HEK293 (cell line): ENCODE measurements at regions of chr2 and their contacts with region 1.

Region 1: GRCh38 chr2:201071479-201072200 is at the starts of genes HYCC2 and NDUFB3:
- H3K4me3 ChIP-seq: peak within 1 kb of the TSS; percentile 100
- H3K27ac ChIP-seq: peak within 1 kb of the TSS; percentile 85
- H3K4me1 ChIP-seq: 0 out of 2 replicates have a peak, but pooled peaks cover 3% of the 10 kb centered on the region
- CTCF ChIP-seq: peak; percentile 98

Region 2: GRCh38 chr2:200820573-200821234 is 250.9 kb before region 1 on chr2:
- CTCF ChIA-PET with region 1: no interaction called
- POLR2A ChIA-PET with region 1: no interaction called
- H3K4me3 ChIP-seq: no peak overlapping the region
- H3K27ac ChIP-seq: no peak overlapping the region
- H3K4me1 ChIP-seq: no peaks in the 10 kb centered on the region
- CTCF ChIP-seq: no peak

Region 3: GRCh38 chr2:200901459-200902072 is 170.1 kb before region 1 on chr2:
- CTCF ChIA-PET with region 1: interaction called, 49 read pairs
- POLR2A ChIA-PET with region 1: interaction called, 4 read pairs
- H3K4me3 ChIP-seq: no peak overlapping the region
- H3K27ac ChIP-seq: no peak overlapping the region
- H3K4me1 ChIP-seq: no peaks in the 10 kb centered on the region
- CTCF ChIP-seq: peak; percentile 78

Region 4: DNA sequence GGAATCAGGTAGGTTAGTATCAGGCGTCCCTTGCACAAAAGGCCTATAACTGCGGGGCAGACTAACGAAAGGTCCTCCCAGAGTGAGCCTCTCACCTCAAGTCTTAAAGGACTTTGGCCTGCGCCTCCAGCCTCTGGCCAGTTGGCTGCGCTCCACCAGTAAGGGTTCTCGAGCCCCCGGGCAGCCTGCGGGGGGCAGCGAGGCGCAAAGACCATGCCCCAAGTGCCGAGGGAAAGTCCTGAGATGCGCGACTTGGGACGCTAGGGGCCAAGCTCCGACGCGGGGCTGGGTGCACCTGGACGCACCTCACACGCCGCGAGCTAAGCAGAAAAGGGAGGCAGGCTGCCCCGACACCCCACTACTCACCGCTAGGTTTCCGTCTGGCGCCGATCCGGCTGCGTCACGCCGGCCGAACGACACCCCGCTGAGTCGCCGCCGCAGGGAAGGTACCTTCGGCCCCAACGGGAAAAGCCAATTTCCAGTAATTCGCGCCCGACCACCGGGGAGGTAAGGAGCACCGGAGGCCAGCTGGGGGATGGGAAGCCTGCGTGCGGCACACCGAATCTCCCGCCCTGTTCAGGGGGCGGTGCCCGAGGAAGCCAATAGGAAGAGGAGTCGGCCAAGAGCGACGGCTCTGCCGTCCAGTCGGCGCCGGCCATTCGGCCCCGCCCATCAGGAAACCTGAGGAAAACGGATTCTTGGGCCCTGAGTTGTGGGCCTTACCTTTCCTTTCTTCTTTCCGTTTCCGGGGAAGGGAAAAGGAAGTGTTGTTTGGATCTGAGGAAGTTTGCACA is 108.3 kb before region 1 on chr2 and contains the start of gene ORC2:
- CTCF ChIA-PET with region 1: interaction called, 49 read pairs
- POLR2A ChIA-PET with region 1: interaction called, 6 read pairs
- H3K4me3 ChIP-seq: peak within 1 kb of the TSS; percentile 65
- H3K27ac ChIP-seq: peak within 1 kb of the TSS; percentile 94
- H3K4me1 ChIP-seq: peaks cover 9% of the 10 kb centered on the region; the same call in 1 of the 2 replicates
- CTCF ChIP-seq: peak; percentile 99

Region 5: GRCh38 chr2:201049455-201049854 is 22.2 kb before region 1 on chr2:
- CTCF ChIA-PET with region 1: interaction called, 18 read pairs
- POLR2A ChIA-PET with region 1: no interaction called
- H3K4me3 ChIP-seq: no peak overlapping the region
- H3K27ac ChIP-seq: no peak overlapping the region
- H3K4me1 ChIP-seq: no peaks in the 10 kb centered on the region
- CTCF ChIP-seq: no peak